Mammary epithelial cell (primary cell): ENCODE measurements at regions of chr14 and their contacts with region 1.

Region 1: DNA sequence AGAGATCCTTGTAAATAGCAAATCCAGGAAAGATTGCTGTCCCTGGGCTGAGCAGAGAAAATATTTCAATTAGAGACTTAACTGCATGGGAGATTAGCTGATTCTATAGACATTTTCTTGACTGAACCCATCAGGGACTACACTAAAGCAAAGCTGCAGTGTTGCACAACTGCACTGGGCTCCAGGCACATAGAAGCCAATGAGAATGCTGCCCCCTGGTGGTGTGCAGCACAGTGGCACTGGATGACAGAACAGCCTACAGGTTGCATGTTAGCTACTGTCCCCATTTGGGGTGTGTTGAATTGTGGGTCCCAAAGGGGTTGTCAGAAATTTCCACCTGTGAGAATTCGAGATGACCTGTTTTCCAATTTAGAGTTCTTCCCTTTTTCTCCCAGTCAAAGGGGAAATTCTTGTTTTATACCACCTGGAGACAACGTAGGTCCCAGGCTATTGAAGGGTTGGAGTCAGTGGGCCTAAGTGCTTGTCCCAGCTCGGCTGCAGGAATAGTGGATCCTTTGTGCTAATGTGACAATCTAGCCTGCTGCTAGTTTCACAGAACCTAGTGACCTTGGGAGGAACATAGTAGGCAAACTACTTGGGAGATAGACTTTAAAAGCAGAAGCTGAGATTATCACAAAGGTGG is 114.7 kb downstream of the SLC8A3 start:
- DNase-seq: peak; percentile 68
- H3K4me3 ChIP-seq: no peak overlapping the region
- H3K27ac ChIP-seq: no peak overlapping the region
- H3K4me1 ChIP-seq: no peaks in the 10 kb centered on the region
- H3K27me3 ChIP-seq: no peaks in the 10 kb centered on the region
- CTCF ChIP-seq: peak; percentile 96 to 97

Region 2: DNA sequence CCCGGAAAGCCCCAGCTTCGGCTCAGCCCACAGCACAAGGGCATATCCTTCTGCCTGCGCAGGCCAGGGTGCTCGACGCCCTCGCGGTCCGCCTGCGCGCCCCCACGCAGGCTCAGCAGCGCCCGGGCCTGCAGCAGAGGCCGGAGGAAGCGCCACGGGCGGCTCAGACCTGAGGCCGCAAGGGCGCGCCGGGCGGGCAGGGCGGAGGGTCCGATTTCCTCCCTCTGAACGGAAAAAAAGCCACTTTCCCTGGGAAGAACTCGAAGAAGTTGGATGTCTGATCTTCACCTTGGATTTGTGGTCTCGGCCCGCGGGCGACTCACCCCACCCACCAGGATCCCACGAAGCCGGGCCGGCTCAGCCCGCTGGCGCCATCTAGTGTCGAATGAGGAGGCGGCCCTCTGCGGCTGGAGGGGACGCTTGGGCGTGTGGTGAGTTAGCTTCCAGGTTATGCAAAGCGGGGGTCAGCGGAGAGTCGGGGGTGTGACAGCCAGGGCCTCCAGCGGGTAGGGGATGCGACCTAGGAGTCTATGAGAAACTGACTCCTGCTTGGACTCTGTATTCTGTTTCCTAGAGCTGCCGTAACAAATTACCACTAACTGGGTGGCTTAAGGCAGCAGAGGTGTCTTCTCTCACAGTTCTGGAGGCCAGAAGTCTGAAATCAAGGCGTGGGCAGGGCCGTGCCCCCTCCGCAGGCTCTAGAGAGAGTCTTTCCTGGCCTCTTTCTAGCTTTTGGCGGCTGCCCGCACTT is 347.1 kb before region 1 on chr14:
- CTCF ChIA-PET with region 1: no interaction called
- dilution Hi-C with region 1: no loop called
- in situ Hi-C with region 1: no loop called
- intact Hi-C with region 1: loop called (anchors 1 kb)
- DNase-seq: peak; percentile 50
- H3K4me3 ChIP-seq: peak overlapping the region in 2 of 3 experiments; percentile 40 to 41
- H3K27ac ChIP-seq: no peak overlapping the region
- H3K4me1 ChIP-seq: peaks cover 8% of the 10 kb centered on the region
- H3K27me3 ChIP-seq: no peaks in the 10 kb centered on the region
- CTCF ChIP-seq: peak; percentile 85 to 98

Region 3: GRCh38 chr14:69812714-69813113 is 261.3 kb before region 1 on chr14:
- CTCF ChIA-PET with region 1: no interaction called
- dilution Hi-C with region 1: no loop called
- in situ Hi-C with region 1: no loop called
- intact Hi-C with region 1: no loop called
- DNase-seq: no peak
- H3K4me3 ChIP-seq: no peak overlapping the region
- H3K27ac ChIP-seq: no peak overlapping the region
- H3K4me1 ChIP-seq: no peaks in the 10 kb centered on the region
- H3K27me3 ChIP-seq: no peaks in the 10 kb centered on the region
- CTCF ChIP-seq: peak; percentile 4 to 6

Region 4: DNA sequence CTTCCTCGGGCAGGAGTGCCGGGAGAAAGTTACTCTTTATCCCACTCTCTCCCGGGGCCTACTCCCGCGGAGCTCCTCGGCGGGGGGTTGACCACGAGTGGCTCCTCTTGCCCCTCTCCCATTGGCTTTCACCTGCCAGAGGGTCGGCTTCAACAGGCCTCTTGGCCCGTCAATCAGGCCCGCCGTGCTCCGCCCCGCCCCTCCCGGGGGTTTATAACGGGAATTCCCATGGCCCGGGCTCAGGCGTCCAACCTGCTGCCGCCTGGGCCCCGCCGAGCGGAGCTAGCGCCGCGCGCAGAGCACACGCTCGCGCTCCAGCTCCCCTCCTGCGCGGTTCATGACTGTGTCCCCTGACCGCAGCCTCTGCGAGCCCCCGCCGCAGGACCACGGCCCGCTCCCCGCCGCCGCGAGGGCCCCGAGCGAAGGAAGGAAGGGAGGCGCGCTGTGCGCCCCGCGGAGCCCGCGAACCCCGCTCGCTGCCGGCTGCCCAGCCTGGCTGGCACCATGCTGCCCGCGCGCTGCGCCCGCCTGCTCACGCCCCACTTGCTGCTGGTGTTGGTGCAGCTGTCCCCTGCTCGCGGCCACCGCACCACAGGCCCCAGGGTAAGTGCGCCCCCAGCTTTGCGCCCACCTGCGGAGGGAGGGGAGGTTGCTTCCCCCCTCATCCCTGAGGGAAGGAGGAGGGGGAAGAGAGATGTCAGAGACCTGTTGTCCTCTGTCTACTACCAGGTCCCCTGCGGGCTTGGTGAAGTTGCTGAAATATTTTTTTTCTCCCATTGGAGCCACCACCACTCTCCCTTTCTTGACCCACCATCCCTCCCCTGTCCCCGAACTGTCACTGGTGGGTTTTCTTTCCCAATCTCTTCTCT is 194.6 kb before region 1 on chr14 and contains the start of gene SMOC1:
- CTCF ChIA-PET with region 1: no interaction called
- dilution Hi-C with region 1: no loop called
- in situ Hi-C with region 1: no loop called
- intact Hi-C with region 1: loop called (anchors 1 kb)
- DNase-seq: peak; percentile 85
- H3K4me3 ChIP-seq: peak within 1 kb of the TSS in 2 of 3 experiments; percentile 49 to 50
- H3K27ac ChIP-seq: no peak within 1 kb of the TSS
- H3K4me1 ChIP-seq: peaks cover 5% of the 10 kb centered on the region
- H3K27me3 ChIP-seq: no peaks in the 10 kb centered on the region
- CTCF ChIP-seq: no peak
- total RNA-seq, gene SMOC1: 22.3 to 44.9 TPM

Region 5: GRCh38 chr14:70045844-70046535 is 28.1 kb before region 1 on chr14:
- CTCF ChIA-PET with region 1: no interaction called
- dilution Hi-C with region 1: no loop called
- in situ Hi-C with region 1: no loop called
- intact Hi-C with region 1: loop called (anchors 1 kb)
- DNase-seq: peak; percentile 50
- H3K4me3 ChIP-seq: no peak overlapping the region
- H3K27ac ChIP-seq: peak overlapping the region; percentile 9
- H3K4me1 ChIP-seq: peaks cover 12% of the 10 kb centered on the region
- H3K27me3 ChIP-seq: no peaks in the 10 kb centered on the region
- CTCF ChIP-seq: peak; percentile 85 to 96

Region 6: GRCh38 chr14:70096866-70097265 is 22.8 kb after region 1 on chr14:
- CTCF ChIA-PET with region 1: no interaction called
- dilution Hi-C with region 1: no loop called
- in situ Hi-C with region 1: no loop called
- intact Hi-C with region 1: no loop called
- DNase-seq: no peak
- H3K4me3 ChIP-seq: no peak overlapping the region
- H3K27ac ChIP-seq: no peak overlapping the region
- H3K4me1 ChIP-seq: no peaks in the 10 kb centered on the region
- H3K27me3 ChIP-seq: peaks cover 6% of the 10 kb centered on the region
- CTCF ChIP-seq: peak; percentile 31 to 40

Region 7: GRCh38 chr14:70114621-70115156 is 40.6 kb after region 1 on chr14:
- CTCF ChIA-PET with region 1: no interaction called
- dilution Hi-C with region 1: no loop called
- in situ Hi-C with region 1: no loop called
- intact Hi-C with region 1: no loop called
- DNase-seq: no peak
- H3K4me3 ChIP-seq: no peak overlapping the region
- H3K27ac ChIP-seq: no peak overlapping the region
- H3K4me1 ChIP-seq: no peaks in the 10 kb centered on the region
- H3K27me3 ChIP-seq: peaks cover 4% of the 10 kb centered on the region
- CTCF ChIP-seq: no peak

Region 8: GRCh38 chr14:70130482-70130881 is 56.4 kb after region 1 on chr14:
- CTCF ChIA-PET with region 1: no interaction called
- dilution Hi-C with region 1: no loop called
- in situ Hi-C with region 1: no loop called
- intact Hi-C with region 1: no loop called
- DNase-seq: no peak
- H3K4me3 ChIP-seq: no peak overlapping the region
- H3K27ac ChIP-seq: no peak overlapping the region
- H3K4me1 ChIP-seq: no peaks in the 10 kb centered on the region
- H3K27me3 ChIP-seq: peaks cover 4% of the 10 kb centered on the region
- CTCF ChIP-seq: no peak

Region 9: DNA sequence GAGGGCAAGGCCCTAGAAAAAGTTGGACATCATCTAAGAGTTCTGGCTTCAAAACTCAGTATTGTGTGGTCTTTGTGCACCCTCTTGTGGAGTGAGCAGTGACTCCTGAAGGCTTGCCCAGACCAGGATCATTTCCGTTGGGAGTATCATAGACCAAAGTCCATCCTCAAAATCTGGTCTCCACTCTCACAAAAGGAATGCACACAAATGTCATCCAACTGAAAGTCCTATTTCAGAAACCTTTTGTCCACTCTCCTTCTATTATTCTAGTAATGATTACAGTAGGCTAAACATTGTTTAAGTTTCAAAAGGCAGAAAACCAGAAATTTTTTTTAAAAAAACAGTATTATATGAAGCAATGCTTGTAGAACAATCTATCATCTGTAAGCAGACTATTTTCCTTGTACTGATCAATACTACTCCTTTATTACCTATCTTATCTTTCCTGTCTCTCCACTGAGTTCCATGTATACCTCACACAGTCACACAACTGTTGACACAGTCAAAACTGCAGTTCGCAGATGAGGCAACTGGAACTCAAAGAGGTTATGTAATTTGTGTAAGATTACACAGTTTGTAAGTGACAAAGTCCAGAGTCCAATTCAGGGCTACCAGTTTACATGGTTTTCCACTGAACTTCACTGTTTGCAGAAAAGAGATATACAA is 244.1 kb after region 1 on chr14:
- CTCF ChIA-PET with region 1: no interaction called
- dilution Hi-C with region 1: no loop called
- in situ Hi-C with region 1: loop called in 1 of 2 experiments (anchors 25 kb)
- intact Hi-C with region 1: no loop called
- DNase-seq: peak; percentile 48
- H3K4me3 ChIP-seq: no peak overlapping the region
- H3K27ac ChIP-seq: no peak overlapping the region
- H3K4me1 ChIP-seq: peaks cover 9% of the 10 kb centered on the region
- H3K27me3 ChIP-seq: no peaks in the 10 kb centered on the region
- CTCF ChIP-seq: peak; percentile 42 to 65